CD8-positive, alpha-beta T cell (primary cell): ENCODE measurements at regions of chr15 and their contacts with region 1.

Region 1: GRCh38 chr15:79184465-79184892 is 93.9 kb upstream of the RASGRF1 start:
- DNase-seq: peak; percentile 27 to 76 (median 61)
- ATAC-seq: no peak
- H3K4me3 ChIP-seq: no peak overlapping the region
- H3K4me3 Mint-ChIP-seq: no peak overlapping the region
- H3K27ac ChIP-seq: no peak overlapping the region
- H3K27ac Mint-ChIP-seq: no peak overlapping the region
- H3K4me1 ChIP-seq: no peaks in the 10 kb centered on the region
- H3K4me1 Mint-ChIP-seq: no peaks in the 10 kb centered on the region
- H3K27me3 ChIP-seq: no peaks in the 10 kb centered on the region
- H3K27me3 Mint-ChIP-seq: peaks cover 8% of the 10 kb centered on the region
- CTCF ChIP-seq: peak; percentile 88

Region 2: GRCh38 chr15:78618490-78618934 is 566.0 kb before region 1 on chr15:
- CTCF ChIA-PET with region 1: no interaction called
- POLR2A ChIA-PET with region 1: no interaction called
- intact Hi-C with region 1: loop called in 1 of 2 experiments (anchors 5 kb)
- DNase-seq: peak; percentile 56 to 88 (median 78)
- ATAC-seq: no peak
- H3K4me3 ChIP-seq: no peak overlapping the region
- H3K4me3 Mint-ChIP-seq: no peak overlapping the region
- H3K27ac ChIP-seq: no peak overlapping the region
- H3K27ac Mint-ChIP-seq: no peak overlapping the region
- H3K4me1 ChIP-seq: peaks cover 9% of the 10 kb centered on the region
- H3K4me1 Mint-ChIP-seq: peaks cover 16% of the 10 kb centered on the region
- H3K27me3 ChIP-seq: peaks cover 5 to 6% of the 10 kb centered on the region in 2 experiments
- H3K27me3 Mint-ChIP-seq: peaks cover 30% of the 10 kb centered on the region
- CTCF ChIP-seq: peak; percentile 72

Region 3: DNA sequence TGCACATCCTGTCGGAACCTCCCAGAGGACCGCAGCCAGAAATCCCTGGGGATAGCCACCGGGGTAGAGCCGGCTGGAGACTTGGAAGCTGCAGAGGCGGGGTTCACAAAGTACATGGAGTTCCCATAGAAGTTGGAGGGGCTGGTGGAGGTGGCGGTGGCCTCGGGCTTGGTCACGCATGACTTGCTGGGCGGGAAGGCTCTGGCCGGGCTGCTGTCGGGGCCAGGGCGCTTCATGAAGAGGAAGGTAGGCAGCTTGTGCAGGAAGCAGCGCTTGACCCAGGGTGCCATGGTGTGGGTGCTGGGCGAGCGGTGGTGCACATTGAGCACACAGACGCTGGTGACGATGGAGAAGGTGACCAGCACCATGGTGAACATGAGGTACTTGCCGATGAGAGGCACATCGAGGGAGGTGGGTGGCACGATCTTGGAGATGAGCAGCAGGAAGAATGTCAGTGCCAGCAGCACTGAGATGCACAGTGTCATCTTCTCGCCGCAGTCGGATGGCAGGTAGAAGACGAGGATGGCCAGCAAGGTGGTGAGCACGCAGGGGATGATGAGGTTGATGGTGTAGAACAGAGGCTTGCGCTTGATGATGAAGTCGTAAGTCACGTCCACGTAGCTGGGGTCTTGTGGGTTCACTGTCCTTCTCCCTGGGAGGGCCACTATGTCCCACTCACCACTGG is 555.3 kb before region 1 on chr15:
- CTCF ChIA-PET with region 1: no interaction called
- POLR2A ChIA-PET with region 1: no interaction called
- intact Hi-C with region 1: no loop called
- DNase-seq: no peak
- ATAC-seq: no peak
- H3K4me3 ChIP-seq: no peak overlapping the region
- H3K4me3 Mint-ChIP-seq: no peak overlapping the region
- H3K27ac ChIP-seq: no peak overlapping the region
- H3K27ac Mint-ChIP-seq: no peak overlapping the region
- H3K4me1 ChIP-seq: no peaks in the 10 kb centered on the region
- H3K4me1 Mint-ChIP-seq: no peaks in the 10 kb centered on the region
- H3K27me3 ChIP-seq: no peaks in the 10 kb centered on the region
- H3K27me3 Mint-ChIP-seq: peaks cover 15% of the 10 kb centered on the region
- CTCF ChIP-seq: no peak

Region 4: DNA sequence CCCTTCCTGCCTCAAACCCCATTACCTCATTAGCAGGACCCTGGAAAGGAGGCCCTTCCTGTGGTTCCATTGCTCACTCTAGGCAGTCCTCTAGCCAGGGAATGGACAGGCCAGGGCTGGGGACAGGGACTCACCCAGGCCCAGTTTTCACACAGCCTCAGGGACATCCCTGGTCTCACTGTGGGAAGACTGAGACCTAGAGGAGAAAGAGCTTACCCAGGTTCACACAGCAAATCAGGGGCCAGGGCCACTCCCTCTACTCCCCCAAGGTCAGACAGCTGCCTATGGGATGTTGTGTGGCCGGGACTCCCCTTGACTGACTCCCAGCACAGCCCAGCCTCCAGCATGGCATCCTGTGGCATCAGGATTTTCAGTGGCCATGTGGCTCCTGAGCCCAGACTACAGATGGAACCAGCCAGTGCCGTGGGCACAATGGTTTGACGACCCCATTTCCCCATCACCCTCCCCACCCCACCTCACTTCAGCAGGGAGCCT is 422.5 kb before region 1 on chr15:
- CTCF ChIA-PET with region 1: interaction called, 3 read pairs
- POLR2A ChIA-PET with region 1: no interaction called
- intact Hi-C with region 1: loop called in 1 of 2 experiments (anchors 5 kb)
- DNase-seq: no peak
- ATAC-seq: no peak
- H3K4me3 ChIP-seq: peak overlapping the region in 1 of 2 experiments; percentile 45
- H3K4me3 Mint-ChIP-seq: peak overlapping the region; percentile 55
- H3K27ac ChIP-seq: peak overlapping the region; percentile 39 to 71
- H3K27ac Mint-ChIP-seq: peak overlapping the region; percentile 85
- H3K4me1 ChIP-seq: peaks cover 20% of the 10 kb centered on the region
- H3K4me1 Mint-ChIP-seq: peaks cover 26% of the 10 kb centered on the region
- H3K27me3 ChIP-seq: no peaks in the 10 kb centered on the region
- H3K27me3 Mint-ChIP-seq: no peaks in the 10 kb centered on the region
- CTCF ChIP-seq: no peak

Region 5: DNA sequence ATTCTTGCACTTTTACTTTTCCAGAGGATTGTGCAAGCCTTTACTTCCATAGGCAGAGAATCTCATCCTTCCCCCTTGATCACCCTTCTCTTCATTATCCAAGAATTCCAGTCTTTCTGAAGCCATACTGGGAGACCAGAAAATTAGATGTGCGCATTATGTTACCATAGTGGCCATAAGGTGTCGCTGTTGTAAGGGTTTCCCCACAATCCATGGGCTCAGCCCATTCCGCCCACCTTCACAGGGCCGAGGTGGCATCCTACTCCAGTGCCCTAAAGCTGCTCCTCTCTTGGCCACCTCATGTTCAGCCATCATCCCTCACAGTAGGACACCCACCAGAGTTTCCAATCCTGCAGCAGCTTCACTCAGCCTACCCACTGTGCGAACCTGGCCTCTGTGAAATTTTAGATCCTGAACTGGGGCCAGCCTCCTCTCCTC is 274.7 kb before region 1 on chr15:
- CTCF ChIA-PET with region 1: interaction called, 3 read pairs
- POLR2A ChIA-PET with region 1: no interaction called
- intact Hi-C with region 1: loop called in 1 of 2 experiments (anchors 2 kb)
- DNase-seq: peak in 3 of 9 experiments; percentile 43 to 57 (median 43)
- ATAC-seq: peak; percentile 59
- H3K4me3 ChIP-seq: no peak overlapping the region
- H3K4me3 Mint-ChIP-seq: no peak overlapping the region
- H3K27ac ChIP-seq: no peak overlapping the region
- H3K27ac Mint-ChIP-seq: peak overlapping the region; percentile 24
- H3K4me1 ChIP-seq: no peaks in the 10 kb centered on the region
- H3K4me1 Mint-ChIP-seq: peaks cover 23% of the 10 kb centered on the region
- H3K27me3 ChIP-seq: no peaks in the 10 kb centered on the region
- H3K27me3 Mint-ChIP-seq: no peaks in the 10 kb centered on the region
- CTCF ChIP-seq: peak; percentile 56

Region 6: DNA sequence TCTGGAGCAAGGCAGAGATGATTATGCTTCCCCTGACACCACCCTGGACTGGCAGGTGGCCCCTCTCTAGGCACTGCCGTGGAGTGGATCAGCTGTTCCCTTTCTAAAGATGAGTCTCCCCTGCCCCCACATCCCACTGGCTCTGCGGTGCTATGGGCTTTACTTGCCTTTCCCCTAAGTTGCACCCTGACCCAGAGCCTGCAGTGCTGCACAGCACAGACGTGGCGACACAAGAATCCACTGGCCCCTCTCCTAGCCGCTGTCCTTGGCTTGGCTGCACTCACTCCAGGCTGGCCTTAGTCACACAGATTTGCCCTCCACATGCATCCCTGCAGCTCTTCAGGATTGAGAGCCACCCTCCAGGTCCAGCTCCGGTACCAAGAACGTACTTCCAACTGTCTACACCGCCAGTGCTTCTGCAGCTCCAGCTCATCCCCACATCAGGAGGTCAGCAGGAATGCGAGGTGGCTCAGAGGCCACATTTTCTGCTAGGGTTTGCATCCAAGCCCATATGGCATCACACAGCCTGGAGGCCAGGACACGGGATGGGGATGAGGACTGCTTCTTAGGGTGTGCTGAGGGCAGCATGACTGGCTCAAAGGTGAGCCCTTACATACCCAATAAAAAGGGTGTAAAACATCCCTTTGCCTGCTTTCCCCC is 11.5 kb before region 1 on chr15:
- CTCF ChIA-PET with region 1: interaction called, 23 read pairs
- POLR2A ChIA-PET with region 1: no interaction called
- intact Hi-C with region 1: no loop called
- DNase-seq: no peak
- ATAC-seq: no peak
- H3K4me3 ChIP-seq: no peak overlapping the region
- H3K4me3 Mint-ChIP-seq: no peak overlapping the region
- H3K27ac ChIP-seq: no peak overlapping the region
- H3K27ac Mint-ChIP-seq: no peak overlapping the region
- H3K4me1 ChIP-seq: no peaks in the 10 kb centered on the region
- H3K4me1 Mint-ChIP-seq: no peaks in the 10 kb centered on the region
- H3K27me3 ChIP-seq: no peaks in the 10 kb centered on the region
- H3K27me3 Mint-ChIP-seq: peaks cover 24% of the 10 kb centered on the region
- CTCF ChIP-seq: no peak

Region 7: GRCh38 chr15:79209690-79210089 is 25.2 kb after region 1 on chr15:
- CTCF ChIA-PET with region 1: interaction called, 14 read pairs
- POLR2A ChIA-PET with region 1: no interaction called
- intact Hi-C with region 1: no loop called
- DNase-seq: no peak
- ATAC-seq: no peak
- H3K4me3 ChIP-seq: no peak overlapping the region
- H3K4me3 Mint-ChIP-seq: no peak overlapping the region
- H3K27ac ChIP-seq: no peak overlapping the region
- H3K27ac Mint-ChIP-seq: no peak overlapping the region
- H3K4me1 ChIP-seq: no peaks in the 10 kb centered on the region
- H3K4me1 Mint-ChIP-seq: no peaks in the 10 kb centered on the region
- H3K27me3 ChIP-seq: peaks cover 0 to 4% of the 10 kb centered on the region in 2 experiments
- H3K27me3 Mint-ChIP-seq: peaks cover 46% of the 10 kb centered on the region
- CTCF ChIP-seq: no peak